Panc1 (cell line): ENCODE measurements at regions of chr6 and their contacts with region 1.

Region 1: DNA sequence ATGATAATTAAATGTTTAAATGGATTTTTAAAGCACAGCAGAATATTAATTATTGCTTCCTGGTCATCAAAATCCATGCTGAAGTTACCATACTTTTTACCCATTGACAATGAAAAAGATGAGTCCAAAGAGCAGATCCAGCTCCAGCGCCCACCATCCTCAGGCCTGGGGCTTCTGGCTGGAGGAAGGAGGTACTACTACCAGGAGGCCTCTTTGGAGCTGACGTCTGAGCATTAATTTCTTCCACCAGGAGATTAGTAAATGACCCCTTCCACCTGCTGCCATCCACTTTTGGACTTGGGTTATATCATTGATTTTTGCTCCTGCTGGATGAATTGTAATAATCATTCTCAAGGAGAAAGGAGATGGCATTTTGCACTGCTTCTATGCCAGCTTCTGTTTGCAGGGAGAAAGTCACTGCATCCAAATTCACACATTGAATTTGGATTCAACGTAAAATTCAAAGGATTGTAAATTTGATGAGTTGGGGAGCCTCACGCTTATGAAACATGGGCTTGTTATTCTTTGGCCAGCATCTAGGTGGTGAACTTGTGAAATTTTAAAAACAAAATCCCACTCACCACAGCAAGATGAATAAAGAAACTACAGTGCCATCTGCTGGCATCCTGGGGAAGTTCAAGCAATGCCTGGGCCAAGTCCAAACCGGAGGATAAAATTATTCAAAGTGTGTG is 121.8 kb downstream of the SASH1 start:
- DNase-seq: peak; percentile 48
- ATAC-seq: peak; percentile 80
- H3K4me3 ChIP-seq: no peak overlapping the region
- H3K27ac ChIP-seq: no peak overlapping the region
- H3K4me1 ChIP-seq: no peaks in the 10 kb centered on the region
- H3K27me3 ChIP-seq: no peaks in the 10 kb centered on the region
- CTCF ChIP-seq: peak; percentile 86

Region 2: DNA sequence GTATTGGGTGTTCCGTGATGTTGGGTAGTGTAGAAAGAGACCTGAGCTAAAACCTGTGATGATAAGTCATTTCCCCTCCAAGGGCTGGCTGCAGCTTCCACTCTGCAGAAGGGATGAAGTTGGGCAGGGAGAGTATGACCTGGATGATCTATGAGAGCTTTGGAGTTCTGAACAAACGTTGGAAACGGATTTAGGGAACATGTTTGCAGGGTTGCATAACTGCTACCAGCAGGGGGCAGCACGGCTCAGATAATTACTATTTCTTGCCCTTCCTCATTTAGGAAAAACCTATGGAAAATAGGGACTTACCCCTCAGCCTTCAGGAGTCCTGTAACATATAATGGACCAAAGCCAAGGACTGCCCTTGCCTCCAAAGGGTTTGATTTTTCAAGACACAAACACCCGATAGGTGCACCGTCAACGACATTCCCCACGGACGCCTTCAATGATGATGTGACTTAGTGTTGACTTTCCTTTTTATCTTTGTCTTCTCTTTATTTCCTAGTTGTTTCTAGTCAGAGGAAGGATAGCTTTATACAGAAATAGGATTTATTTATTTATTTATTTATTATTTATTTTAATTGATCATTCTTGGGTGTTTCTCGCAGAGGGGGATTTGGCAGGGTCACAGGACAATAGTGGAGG is 286.8 kb before region 1 on chr6:
- CTCF ChIA-PET with region 1: interaction called, 5 read pairs
- POLR2A ChIA-PET with region 1: no interaction called
- in situ Hi-C with region 1: no loop called
- intact Hi-C with region 1: loop called (anchors 1 kb)
- DNase-seq: no peak
- ATAC-seq: no peak
- H3K4me3 ChIP-seq: no peak overlapping the region
- H3K27ac ChIP-seq: no peak overlapping the region
- H3K4me1 ChIP-seq: no peaks in the 10 kb centered on the region
- H3K27me3 ChIP-seq: no peaks in the 10 kb centered on the region
- CTCF ChIP-seq: peak; percentile 81

Region 3: DNA sequence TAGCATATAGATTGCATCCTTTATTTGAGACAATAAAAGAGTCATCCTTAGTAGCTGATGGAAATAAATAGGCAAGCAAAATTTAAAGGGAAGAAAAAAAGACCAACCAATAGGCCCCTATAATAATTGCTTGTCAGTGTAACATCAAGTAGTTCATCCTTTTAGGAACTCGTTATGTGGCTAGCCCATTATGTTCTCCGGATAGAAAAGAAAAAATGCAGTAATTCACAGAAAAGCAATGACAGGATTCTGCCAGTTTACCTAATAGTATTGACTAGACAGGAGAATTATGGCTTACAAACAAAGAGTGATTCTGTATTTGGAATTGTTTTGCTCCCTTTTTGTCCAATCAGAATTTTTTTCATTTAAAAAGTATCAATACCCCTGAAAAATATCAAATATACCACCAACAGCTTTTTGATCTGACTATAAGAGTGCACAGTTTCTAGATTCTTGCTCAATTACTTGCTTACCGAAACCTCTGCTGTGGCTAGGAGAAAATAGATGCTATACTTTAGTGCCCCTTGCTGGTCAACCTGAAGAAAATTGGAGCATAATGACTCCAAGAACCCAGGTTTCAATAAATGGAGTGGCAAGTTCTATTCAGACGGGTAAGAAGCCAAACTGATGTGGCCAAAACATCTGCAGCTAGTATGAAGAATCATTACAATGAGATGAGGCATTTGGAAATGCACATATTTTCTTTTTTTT is 213.3 kb before region 1 on chr6:
- CTCF ChIA-PET with region 1: no interaction called
- POLR2A ChIA-PET with region 1: no interaction called
- in situ Hi-C with region 1: no loop called
- intact Hi-C with region 1: loop called (anchors 10 kb)
- DNase-seq: no peak
- ATAC-seq: no peak
- H3K4me3 ChIP-seq: no peak overlapping the region
- H3K27ac ChIP-seq: no peak overlapping the region
- H3K4me1 ChIP-seq: no peaks in the 10 kb centered on the region
- H3K27me3 ChIP-seq: no peaks in the 10 kb centered on the region
- CTCF ChIP-seq: peak; percentile 51

Region 4: GRCh38 chr6:148677594-148678476 is 213.4 kb after region 1 on chr6:
- CTCF ChIA-PET with region 1: no interaction called
- POLR2A ChIA-PET with region 1: no interaction called
- in situ Hi-C with region 1: no loop called
- intact Hi-C with region 1: no loop called
- DNase-seq: no peak
- ATAC-seq: no peak
- H3K4me3 ChIP-seq: no peak overlapping the region
- H3K27ac ChIP-seq: no peak overlapping the region
- H3K4me1 ChIP-seq: no peaks in the 10 kb centered on the region
- H3K27me3 ChIP-seq: no peaks in the 10 kb centered on the region
- CTCF ChIP-seq: no peak